ENCODE measurements at regions of chr5 and their contacts with region 1.

Region 1: DNA sequence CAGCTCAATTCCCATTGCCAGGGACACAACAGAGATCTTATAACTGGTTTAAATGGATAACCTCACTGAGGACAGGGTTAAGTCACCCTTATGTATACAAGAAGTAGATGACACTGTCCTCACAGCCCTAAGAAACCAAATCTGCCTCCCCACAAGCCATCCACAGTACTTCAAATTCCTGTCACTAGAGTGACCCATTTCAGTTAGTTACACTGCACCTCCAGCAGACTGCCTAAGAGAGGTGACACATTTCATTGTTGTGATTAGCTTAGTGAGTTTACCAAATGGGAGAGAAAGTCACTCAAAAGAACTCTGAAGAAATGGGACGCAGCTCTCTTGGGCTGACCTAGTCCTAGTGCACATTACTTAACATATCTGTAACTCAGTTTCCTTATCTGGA is 53.6 kb upstream of the HTR1A start:
- DNase-seq: no peak
- H3K4me3 ChIP-seq: no peak overlapping the region
- H3K27ac ChIP-seq: no peak overlapping the region
- H3K4me1 ChIP-seq: no peaks in the 10 kb centered on the region
- H3K27me3 ChIP-seq: no peaks in the 10 kb centered on the region
- CTCF ChIP-seq: no peak

Region 2: DNA sequence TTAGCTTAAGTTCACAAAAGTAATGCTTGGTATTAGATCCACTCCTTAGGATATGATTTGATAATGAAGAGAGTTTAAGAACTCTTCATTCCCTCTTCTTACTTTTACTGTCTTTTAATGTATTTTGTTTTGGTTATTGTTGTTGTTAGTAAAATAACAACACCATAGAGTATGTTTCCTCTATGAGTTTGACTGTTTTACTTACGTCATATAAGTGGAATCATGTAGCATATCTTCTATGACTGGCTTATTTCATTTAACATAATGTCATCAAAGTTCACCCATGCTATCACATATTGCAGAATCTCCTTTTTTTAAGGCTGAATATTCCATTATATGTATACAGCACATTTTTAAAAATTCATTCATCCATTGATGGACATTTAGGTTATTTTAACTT is 47.7 kb after region 1 on chr5:
- CTCF ChIA-PET with region 1: no interaction called
- dilution Hi-C with region 1: no loop called
- in situ Hi-C with region 1: no loop called
- intact Hi-C with region 1: loop called (anchors 2 kb)
- DNase-seq: no peak
- H3K4me3 ChIP-seq: no peak overlapping the region
- H3K27ac ChIP-seq: no peak overlapping the region
- H3K4me1 ChIP-seq: no peaks in the 10 kb centered on the region
- H3K27me3 ChIP-seq: no peaks in the 10 kb centered on the region
- CTCF ChIP-seq: no peak

Region 3: GRCh38 chr5:64201996-64202395 is 186.2 kb after region 1 on chr5:
- CTCF ChIA-PET with region 1: no interaction called
- dilution Hi-C with region 1: no loop called
- in situ Hi-C with region 1: no loop called
- intact Hi-C with region 1: no loop called
- DNase-seq: no peak
- H3K4me3 ChIP-seq: no peak overlapping the region
- H3K27ac ChIP-seq: no peak overlapping the region
- H3K4me1 ChIP-seq: no peaks in the 10 kb centered on the region
- H3K27me3 ChIP-seq: no peaks in the 10 kb centered on the region
- CTCF ChIP-seq: no peak

Measured in mammary epithelial cell (primary cell).